Posterior cingulate gyrus (tissue), 11 donors: ENCODE measurements at regions of chr22 and their contacts with region 1.

Region 1: DNA sequence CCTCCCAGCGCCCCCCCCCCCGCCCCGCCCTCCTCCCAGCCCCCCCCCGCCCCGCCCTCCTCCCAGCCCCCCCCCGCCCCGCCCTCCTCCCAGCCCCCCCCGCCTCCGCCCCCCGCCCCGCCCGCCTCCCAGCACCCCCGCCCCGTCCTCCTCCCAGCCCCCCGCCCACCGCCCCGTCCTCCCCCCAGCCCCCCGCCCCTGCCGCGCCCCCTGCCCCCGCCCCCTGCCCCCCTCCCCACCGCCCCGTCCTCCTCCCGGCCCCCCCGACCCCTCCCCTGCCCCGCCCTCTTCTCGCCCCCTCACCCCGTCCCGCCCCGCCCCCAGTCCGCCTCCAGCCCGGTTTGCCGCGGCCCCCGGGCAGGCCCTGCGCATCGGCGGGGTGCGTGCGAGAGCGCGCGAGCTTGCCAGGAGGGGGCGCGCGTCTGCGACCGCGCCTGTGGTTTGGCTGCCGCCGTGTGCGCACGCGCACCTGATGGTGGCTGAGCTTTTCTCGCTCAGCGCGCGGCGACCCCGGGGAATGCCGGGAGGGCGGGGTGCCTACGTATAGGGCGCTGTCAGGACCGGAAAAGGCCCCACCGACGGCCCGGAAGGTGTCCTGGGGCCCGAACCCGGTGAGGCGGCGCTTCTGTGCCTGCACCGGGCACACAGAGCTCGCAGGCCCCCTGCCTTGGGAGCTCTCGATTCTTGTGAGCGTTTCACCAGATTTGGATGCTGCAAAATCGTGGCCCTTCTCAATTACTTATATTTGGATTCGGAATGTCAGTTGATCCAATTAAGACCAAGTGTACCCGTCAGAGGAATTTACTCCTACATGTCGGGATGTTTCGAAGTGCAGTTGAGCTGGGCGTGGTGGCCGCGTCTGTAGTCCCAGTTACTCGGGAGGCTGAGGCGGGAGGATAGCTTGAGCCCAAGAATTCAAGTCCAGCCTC is 501 bp upstream of the TTLL12 start:
- DNase-seq: peak; percentile 89 to 99 (median 92)

Region 2: DNA sequence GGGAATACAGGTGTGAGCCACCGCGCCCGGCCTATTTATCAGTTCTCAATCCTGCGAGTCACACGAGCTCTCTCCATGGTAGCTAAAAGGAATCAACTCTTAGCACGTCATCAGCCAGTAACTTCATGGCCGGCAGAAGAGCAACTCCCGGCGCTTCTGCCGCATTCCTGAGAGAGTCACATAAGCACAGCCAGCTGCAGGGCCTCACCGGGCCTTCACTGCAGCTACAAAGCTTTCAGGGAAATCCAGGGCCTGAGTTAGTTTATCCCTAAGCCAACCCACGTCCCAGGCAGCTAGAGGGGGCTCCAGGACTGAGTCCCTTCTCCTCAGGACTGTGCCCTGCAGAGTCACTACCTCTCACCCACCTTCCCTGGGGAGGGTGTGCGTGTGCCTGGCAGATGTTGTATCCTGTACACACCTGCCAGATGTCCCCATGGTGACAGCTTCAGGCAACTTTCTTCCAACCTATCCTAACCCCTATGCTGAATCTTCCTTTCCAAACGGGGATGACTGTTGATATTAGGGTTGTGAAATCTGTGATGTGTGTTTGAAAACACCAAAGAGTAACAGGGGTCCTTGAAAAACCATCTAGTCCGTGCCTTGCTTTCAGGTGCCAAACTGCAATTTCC is 284.4 kb before region 1 on chr22:
- intact Hi-C with region 1: no loop called
- DNase-seq: no peak

Region 3: GRCh38 chr22:43126480-43127165 is 60.8 kb before region 1 on chr22:
- intact Hi-C with region 1: no loop called
- DNase-seq: no peak

Region 4: DNA sequence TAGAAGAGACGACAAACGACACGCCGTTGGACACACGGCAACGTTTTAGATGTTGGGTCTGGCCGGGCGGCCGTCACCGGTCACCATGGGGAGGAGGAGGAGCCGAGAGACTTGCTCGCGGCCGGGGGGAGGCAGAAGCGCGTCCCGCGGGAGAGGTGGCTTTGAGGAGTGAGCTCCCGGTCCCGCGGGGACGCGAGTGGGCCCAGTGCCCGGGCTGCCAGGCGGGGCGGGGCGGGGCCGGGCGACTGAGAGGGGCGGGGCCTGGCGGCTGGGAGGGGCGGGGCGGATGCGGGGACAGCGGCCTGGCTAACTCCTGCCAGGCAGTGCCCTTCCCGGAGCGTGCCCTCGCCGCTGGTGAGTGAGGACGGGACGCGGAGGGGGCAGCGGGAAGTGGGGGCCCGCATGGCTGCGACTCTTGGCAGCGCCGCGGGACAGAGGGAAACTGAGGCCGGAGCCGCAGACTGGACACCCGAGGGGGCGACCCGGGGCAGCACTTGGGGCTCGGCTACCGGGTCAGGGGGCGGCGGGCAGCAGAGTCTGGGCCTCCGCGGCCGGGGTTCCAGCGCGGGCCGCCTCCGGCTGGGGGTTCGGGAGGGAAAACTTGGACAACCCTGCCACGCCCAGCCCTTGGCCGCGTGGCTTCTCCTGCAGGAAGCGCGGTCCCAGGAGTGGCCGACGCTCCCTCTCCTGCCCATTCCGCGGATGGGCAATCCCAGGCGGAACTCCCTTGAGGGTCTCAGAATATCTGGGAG is 36.0 kb before region 1 on chr22 and contains the start of gene TSPO:
- intact Hi-C with region 1: loop called (anchors 2 kb)
- DNase-seq: peak; percentile 49 to 97 (median 71)